OCI-LY7 (cell line): ENCODE measurements at regions of chr3 and their contacts with region 1.

Region 1: GRCh38 chr3:157159762-157160657 is at the start of gene CCNL1:
- DNase-seq: peak; percentile 97
- H3K4me3 ChIP-seq: peak within 1 kb of the TSS; percentile 88
- H3K27ac ChIP-seq: peak within 1 kb of the TSS; percentile 92
- H3K4me1 ChIP-seq: peaks cover 48% of the 10 kb centered on the region
- CTCF ChIP-seq: no peak
- total RNA-seq, gene CCNL1: 221 and 280 TPM in 2 replicates

Region 2: DNA sequence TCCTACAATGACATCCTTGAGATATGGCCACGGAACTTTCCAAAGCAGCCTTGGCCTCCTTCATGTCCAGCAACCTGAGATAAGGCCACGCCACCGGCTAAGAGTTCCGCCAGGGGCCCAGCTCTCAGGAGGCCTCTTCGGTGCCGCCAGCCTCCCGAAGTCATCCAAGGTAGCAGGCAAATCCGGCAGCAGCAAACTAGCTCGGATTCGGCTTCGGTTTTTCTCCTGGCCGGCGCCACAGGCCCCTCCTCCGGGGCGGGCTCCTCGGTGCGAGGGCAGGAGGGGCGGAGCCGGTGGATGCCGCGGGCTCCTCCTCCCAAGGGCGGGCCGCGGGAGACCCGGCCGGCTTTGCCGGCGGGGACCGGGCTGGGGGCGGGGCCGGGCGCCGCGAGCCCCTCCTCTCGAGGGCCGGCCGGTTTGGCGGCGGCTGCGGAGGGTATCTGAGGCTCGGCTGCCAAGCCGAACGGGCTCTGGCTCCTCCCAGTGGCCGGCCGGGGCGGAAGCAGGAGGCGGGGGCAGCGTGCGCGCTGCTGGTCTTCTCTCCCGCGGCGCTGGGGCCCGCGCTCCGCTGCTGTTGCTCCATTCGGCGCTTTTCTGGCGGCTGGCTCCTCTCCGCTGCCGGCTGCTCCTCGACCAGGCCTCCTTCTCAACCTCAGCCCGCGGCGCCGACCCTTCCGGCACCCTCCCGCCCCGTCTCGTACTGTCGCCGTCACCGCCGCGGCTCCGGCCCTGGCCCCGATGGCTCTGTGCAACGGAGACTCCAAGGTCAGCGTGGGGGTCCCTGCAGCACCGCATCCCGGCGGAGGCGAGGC is 1289.7 kb before region 1 on chr3 and contains the start of gene GMPS:
- CTCF ChIA-PET with region 1: no interaction called
- POLR2A ChIA-PET with region 1: no interaction called
- intact Hi-C with region 1: loop called (anchors 10 kb)
- DNase-seq: peak; percentile 95
- H3K4me3 ChIP-seq: peak within 1 kb of the TSS; percentile 88
- H3K27ac ChIP-seq: peak within 1 kb of the TSS; percentile 81
- H3K4me1 ChIP-seq: peaks cover 23% of the 10 kb centered on the region
- CTCF ChIP-seq: peak; percentile 37; the same call in 1 of the 2 replicates
- total RNA-seq, gene GMPS: 32.3 and 37.6 TPM in 2 replicates

Region 3: GRCh38 chr3:156554842-156555687 is 604.9 kb before region 1 on chr3 and contains the start of gene SSR3:
- CTCF ChIA-PET with region 1: no interaction called
- POLR2A ChIA-PET with region 1: no interaction called
- intact Hi-C with region 1: loop called (anchors 2 kb)
- DNase-seq: peak; percentile 99
- H3K4me3 ChIP-seq: peak within 1 kb of the TSS; percentile 96
- H3K27ac ChIP-seq: peak within 1 kb of the TSS; percentile 28
- H3K4me1 ChIP-seq: peaks cover 11% of the 10 kb centered on the region
- CTCF ChIP-seq: no peak
- total RNA-seq, gene SSR3: 61.2 and 63.3 TPM in 2 replicates

Region 4: DNA sequence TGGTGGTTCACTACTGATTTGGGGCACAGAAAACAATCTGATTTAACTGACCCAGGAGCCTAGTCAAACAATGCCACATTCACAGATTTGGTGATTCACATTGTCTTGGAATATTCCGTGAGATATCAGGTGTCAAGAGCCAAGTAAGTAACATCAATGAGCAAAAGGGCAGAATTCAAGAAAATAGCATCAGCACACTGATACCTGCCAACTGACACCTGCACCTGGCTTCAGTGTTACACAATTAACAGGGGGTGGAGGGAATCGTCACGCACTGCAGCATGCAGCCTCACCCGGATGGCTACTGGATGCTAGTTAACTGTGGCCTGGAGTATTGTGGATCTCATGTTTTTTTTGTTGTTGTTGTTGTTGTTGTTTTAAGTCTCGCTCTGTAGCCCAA is 17.7 kb before region 1 on chr3:
- CTCF ChIA-PET with region 1: interaction called, 3 read pairs
- POLR2A ChIA-PET with region 1: interaction called, 14 read pairs
- intact Hi-C with region 1: loop called (anchors 2 kb)
- DNase-seq: peak; percentile 80
- H3K4me3 ChIP-seq: no peak overlapping the region
- H3K27ac ChIP-seq: peak overlapping the region; percentile 82
- H3K4me1 ChIP-seq: peaks cover 39% of the 10 kb centered on the region
- CTCF ChIP-seq: no peak

Region 5: DNA sequence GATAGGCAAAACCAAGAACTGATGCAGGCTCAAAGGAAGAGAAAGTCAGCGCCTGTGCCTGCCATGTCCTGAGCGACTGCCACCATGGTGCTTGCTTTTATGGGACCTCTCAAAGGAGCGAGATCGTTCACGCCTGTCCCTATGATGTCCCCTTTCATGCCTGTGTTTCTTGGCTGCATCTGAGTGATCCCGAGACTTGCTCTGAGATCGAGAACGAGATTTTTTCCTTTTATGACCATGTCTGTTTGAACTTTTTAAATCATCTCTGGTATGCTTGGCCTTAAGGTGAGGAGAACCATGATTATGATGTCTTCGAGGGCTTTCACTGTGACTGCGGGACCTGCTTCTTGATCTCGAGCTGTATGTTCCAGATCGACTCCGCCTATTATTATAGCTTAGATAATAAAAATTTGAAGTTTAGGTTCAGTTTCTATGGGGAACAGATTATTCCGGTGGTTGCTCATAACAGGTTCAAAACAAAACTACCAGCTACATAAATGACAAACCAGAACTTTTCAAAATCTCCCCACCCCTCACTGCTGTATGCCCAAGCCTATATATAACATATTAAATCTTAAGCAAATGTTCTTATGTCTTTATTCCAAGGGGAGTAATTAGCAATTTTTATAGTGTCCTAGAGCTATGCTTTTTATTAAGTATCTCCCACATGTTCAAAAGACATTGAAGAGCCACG is 11.7 kb before region 1 on chr3:
- CTCF ChIA-PET with region 1: interaction called, 3 read pairs
- POLR2A ChIA-PET with region 1: interaction called, 14 read pairs
- intact Hi-C with region 1: loop called (anchors 2 kb)
- DNase-seq: no peak
- H3K4me3 ChIP-seq: no peak overlapping the region
- H3K27ac ChIP-seq: no peak overlapping the region
- H3K4me1 ChIP-seq: peaks cover 13% of the 10 kb centered on the region
- CTCF ChIP-seq: no peak

Region 6: GRCh38 chr3:157174649-157175498 is 14.9 kb after region 1 on chr3:
- CTCF ChIA-PET with region 1: interaction called, 9 read pairs
- POLR2A ChIA-PET with region 1: interaction called, 245 read pairs
- intact Hi-C with region 1: loop called (anchors 1 kb)
- DNase-seq: peak; percentile 100
- H3K4me3 ChIP-seq: peak overlapping the region; percentile 88
- H3K27ac ChIP-seq: peak overlapping the region; percentile 86
- H3K4me1 ChIP-seq: peaks cover 26% of the 10 kb centered on the region
- CTCF ChIP-seq: no peak

Region 7: GRCh38 chr3:158109804-158110657 is 950.0 kb after region 1 on chr3 and contains the start of gene RSRC1:
- CTCF ChIA-PET with region 1: no interaction called
- POLR2A ChIA-PET with region 1: no interaction called
- intact Hi-C with region 1: loop called (anchors 2 kb)
- DNase-seq: peak; percentile 91
- H3K4me3 ChIP-seq: peak within 1 kb of the TSS; percentile 90
- H3K27ac ChIP-seq: peak within 1 kb of the TSS; percentile 80
- H3K4me1 ChIP-seq: peaks cover 37% of the 10 kb centered on the region
- CTCF ChIP-seq: no peak
- total RNA-seq, gene RSRC1: 78.1 and 97.4 TPM in 2 replicates